Psoas muscle (tissue), 8 donors: ENCODE measurements at regions of chr9 and their contacts with region 1.

Region 1: DNA sequence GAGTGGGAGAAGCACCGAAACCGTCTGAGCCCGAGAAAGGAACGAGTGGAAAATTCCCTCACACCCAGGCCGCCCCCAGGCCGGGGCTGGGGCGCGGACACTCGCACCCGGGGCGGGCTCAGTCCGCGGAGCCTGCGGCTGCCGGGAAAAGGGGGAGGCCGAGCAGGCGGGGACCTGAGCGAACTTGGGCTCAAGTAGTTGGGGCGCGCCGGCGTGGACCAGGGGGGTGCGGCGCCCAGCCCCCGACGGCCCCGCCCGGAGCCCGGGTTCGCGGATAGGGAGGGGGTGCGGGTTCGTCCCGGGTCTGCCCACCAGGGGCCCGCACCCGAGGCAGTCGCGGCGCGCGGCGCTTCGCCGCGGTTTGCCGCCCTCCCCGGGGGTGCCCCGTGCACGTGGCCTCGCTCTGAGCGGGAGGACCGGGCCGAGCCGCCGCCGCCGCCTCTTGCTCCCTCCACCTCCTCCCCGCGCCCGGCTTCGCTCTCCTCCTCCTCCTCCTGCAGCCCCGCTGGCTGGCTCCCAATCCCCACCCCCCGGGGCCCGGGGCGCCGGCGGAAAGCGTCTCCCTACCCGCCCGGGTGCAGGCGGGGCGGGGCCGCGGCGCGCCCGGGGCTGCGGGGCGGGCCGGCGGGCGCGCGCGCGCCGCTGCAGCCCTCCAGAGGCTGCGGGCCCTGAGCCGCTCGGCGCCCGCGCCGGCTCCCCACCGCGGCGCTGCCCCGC is 1.1 kb upstream of the NFIB start:
- DNase-seq: peak; percentile 96 to 98
- ATAC-seq: peak; percentile 65 to 82 (median 74)
- H3K4me3 ChIP-seq: peak overlapping the region; percentile 93
- H3K27ac ChIP-seq: peak overlapping the region; percentile 99
- H3K4me1 ChIP-seq: peaks cover 35% of the 10 kb centered on the region
- H3K27me3 ChIP-seq: no peaks in the 10 kb centered on the region
- CTCF ChIP-seq: peak; percentile 5

Region 2: GRCh38 chr9:13139641-13140171 is 1175.4 kb before region 1 on chr9:
- intact Hi-C with region 1: loop called in 1 of 2 experiments (anchors 10 kb)
- DNase-seq: no peak
- ATAC-seq: no peak
- H3K4me3 ChIP-seq: no peak overlapping the region
- H3K27ac ChIP-seq: no peak overlapping the region
- H3K4me1 ChIP-seq: peaks cover 44% of the 10 kb centered on the region
- H3K27me3 ChIP-seq: no peaks in the 10 kb centered on the region
- CTCF ChIP-seq: no peak

Region 3: DNA sequence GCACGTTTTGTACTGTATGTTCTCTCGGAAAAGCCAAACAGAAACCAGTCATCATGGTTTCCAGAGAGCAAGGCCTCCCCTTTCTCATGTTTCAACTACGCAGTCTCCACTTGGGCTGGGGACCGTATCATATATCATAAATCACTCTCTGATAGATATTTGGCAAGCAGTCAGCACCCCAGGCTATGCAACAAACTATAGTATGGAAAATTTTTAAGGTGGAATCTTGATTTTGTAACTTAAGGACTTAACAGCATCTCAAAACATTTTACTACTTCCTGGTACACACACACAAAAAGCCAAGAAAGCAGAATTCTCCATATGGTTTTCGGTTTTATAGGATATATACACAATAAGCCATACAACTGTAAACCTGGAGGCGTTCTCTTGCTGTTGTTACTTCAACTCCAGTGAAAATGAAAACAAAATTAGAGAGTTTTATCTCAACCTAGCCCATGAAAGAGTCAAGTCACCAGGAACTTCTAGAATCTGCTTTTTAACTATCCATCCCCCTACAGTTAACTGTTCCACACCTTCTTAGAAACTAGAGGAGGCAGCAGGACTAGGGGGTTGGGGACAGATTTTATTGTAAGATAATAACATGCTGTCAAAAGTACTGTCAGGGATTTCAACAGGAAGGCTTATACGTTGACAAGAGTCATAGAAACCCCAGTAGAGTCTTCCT is 284.6 kb before region 1 on chr9:
- intact Hi-C with region 1: loop called in 1 of 2 experiments (anchors 10 kb)
- DNase-seq: no peak
- ATAC-seq: peak; percentile 64 to 82 (median 76)
- H3K4me3 ChIP-seq: peak overlapping the region; percentile 55
- H3K27ac ChIP-seq: peak overlapping the region; percentile 85
- H3K4me1 ChIP-seq: peaks cover 37% of the 10 kb centered on the region
- H3K27me3 ChIP-seq: no peaks in the 10 kb centered on the region
- CTCF ChIP-seq: no peak

Region 4: GRCh38 chr9:14353222-14354056 is 38.4 kb after region 1 on chr9:
- intact Hi-C with region 1: loop called (anchors 5 kb)
- DNase-seq: peak; percentile 95 to 96
- ATAC-seq: peak; percentile 72 to 80 (median 77)
- H3K4me3 ChIP-seq: peak overlapping the region; percentile 38
- H3K27ac ChIP-seq: peak overlapping the region; percentile 59
- H3K4me1 ChIP-seq: peaks cover 23% of the 10 kb centered on the region
- H3K27me3 ChIP-seq: no peaks in the 10 kb centered on the region
- CTCF ChIP-seq: peak; percentile 94